Tibial artery (tissue), 4 donors: ENCODE measurements at regions of chr4 and their contacts with region 1.

Region 1: DNA sequence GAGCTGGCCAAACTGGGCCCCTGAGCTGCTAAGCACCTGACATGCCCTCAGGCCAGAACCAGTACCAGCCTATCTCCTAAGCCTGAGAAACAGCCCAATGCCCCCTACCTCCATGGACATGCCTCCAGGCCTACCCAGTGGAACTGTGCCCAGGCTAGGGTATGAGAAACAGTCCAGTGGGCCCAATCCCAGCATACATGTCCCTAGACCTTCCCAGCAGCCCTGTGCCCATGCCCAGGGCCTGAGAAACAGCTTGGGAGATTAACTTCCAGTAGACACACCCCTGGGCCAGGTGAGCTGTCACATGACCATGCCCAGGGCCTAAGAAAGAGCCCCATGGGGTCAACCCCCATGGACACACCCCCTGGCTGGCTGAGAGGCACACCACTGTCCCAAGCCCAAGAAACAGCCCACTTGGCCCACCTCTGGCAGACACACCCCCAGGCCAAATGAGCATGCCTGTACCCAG is 78.8 kb downstream of the CBR4 start:
- DNase-seq: no peak
- H3K4me3 ChIP-seq: no peak overlapping the region
- H3K27ac ChIP-seq: no peak overlapping the region
- H3K4me1 ChIP-seq: no peaks in the 10 kb centered on the region
- H3K27me3 ChIP-seq: no peaks in the 10 kb centered on the region
- CTCF ChIP-seq: no peak

Region 2: GRCh38 chr4:168960716-168961115 is 29.5 kb after region 1 on chr4:
- intact Hi-C with region 1: no loop called
- DNase-seq: no peak
- H3K4me3 ChIP-seq: no peak overlapping the region
- H3K27ac ChIP-seq: no peak overlapping the region
- H3K4me1 ChIP-seq: no peaks in the 10 kb centered on the region
- H3K27me3 ChIP-seq: no peaks in the 10 kb centered on the region
- CTCF ChIP-seq: no peak

Region 3: GRCh38 chr4:168978001-168978700 is 46.9 kb after region 1 on chr4:
- intact Hi-C with region 1: loop called (anchors 2 kb)
- DNase-seq: no peak
- H3K4me3 ChIP-seq: no peak overlapping the region
- H3K27ac ChIP-seq: no peak overlapping the region
- H3K4me1 ChIP-seq: no peaks in the 10 kb centered on the region
- H3K27me3 ChIP-seq: no peaks in the 10 kb centered on the region
- CTCF ChIP-seq: no peak

Region 4: GRCh38 chr4:169485791-169486742 is 554.9 kb after region 1 on chr4:
- intact Hi-C with region 1: loop called (anchors 10 kb)
- DNase-seq: no peak
- H3K4me3 ChIP-seq: no peak overlapping the region
- H3K27ac ChIP-seq: no peak overlapping the region
- H3K4me1 ChIP-seq: no peaks in the 10 kb centered on the region
- H3K27me3 ChIP-seq: no peaks in the 10 kb centered on the region
- CTCF ChIP-seq: peak; percentile 51 to 52